Calu3 (cell line): ENCODE measurements at regions of chr5 and their contacts with region 1.

Region 1: GRCh38 chr5:32585446-32586275 is at the start of gene SUB1:
- DNase-seq: peak; percentile 94
- H3K4me3 Mint-ChIP-seq: peak within 1 kb of the TSS; percentile 96
- H3K27ac Mint-ChIP-seq: peak within 1 kb of the TSS; percentile 97
- H3K4me1 Mint-ChIP-seq: peaks cover 42% of the 10 kb centered on the region
- H3K27me3 Mint-ChIP-seq: no peaks in the 10 kb centered on the region
- CTCF ChIP-seq: no peak
- total RNA-seq, gene SUB1: 312 and 334 TPM in 2 replicates

Region 2: DNA sequence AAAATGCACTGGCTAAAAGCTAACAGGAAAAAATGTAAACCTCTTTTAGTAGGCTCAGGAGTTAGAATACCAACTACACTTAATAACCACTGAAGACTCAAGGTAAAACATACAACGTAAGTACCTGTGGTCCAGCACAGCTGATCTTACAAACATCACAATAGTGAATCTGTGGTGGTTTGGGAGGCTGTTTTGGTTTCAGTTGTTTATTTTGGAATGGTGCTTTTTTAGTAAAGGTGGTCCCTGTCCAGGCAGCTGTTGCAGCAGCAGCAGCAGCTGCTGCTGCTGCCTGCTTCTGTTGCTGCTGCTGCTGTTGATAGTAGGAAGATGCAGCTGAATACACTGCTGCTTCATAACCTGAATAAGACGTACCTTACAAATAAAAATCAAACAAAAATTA is 179.0 kb before region 1 on chr5:
- CTCF ChIA-PET with region 1: no interaction called
- intact Hi-C with region 1: loop called (anchors 10 kb)
- DNase-seq: no peak
- H3K4me3 Mint-ChIP-seq: no peak overlapping the region
- H3K27ac Mint-ChIP-seq: no peak overlapping the region
- H3K4me1 Mint-ChIP-seq: no peaks in the 10 kb centered on the region
- H3K27me3 Mint-ChIP-seq: no peaks in the 10 kb centered on the region
- CTCF ChIP-seq: no peak

Region 3: DNA sequence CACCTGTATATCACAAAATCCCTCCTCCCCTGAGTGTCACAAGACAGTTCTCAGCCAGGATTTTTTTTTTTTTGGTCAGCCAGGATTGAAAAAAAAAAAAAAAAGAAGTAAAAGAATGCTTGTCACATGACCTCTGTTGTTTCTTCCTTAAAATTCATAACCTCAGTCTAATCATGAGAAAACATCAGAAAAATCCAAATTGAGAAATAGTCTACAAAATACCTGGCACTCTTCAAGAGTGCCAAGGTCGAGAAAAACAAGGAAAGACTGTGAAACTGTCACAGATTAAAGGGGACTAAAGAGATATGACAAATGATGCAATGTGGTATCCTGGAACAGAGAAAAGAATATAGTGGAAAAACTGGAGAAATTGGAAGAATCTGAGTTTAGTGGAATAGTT is 58.9 kb before region 1 on chr5:
- CTCF ChIA-PET with region 1: interaction called, 5 read pairs
- intact Hi-C with region 1: loop called (anchors 5 kb)
- DNase-seq: no peak
- H3K4me3 Mint-ChIP-seq: no peak overlapping the region
- H3K27ac Mint-ChIP-seq: no peak overlapping the region
- H3K4me1 Mint-ChIP-seq: peaks cover 16% of the 10 kb centered on the region
- H3K27me3 Mint-ChIP-seq: peaks cover 10% of the 10 kb centered on the region
- CTCF ChIP-seq: no peak